GM13977 (cell line): ENCODE measurements at regions of chr4 and their contacts with region 1.

Region 1: GRCh38 chr4:74189331-74190043 is 31.6 kb downstream of the MTHFD2L start:
- DNase-seq: peak; percentile 18
- CTCF ChIP-seq: peak; percentile 63

Region 2: GRCh38 chr4:74311696-74312313 is 122.3 kb after region 1 on chr4:
- in situ Hi-C with region 1: loop called (anchors 10 kb)
- DNase-seq: peak; percentile 9
- CTCF ChIP-seq: peak; percentile 70

Region 3: DNA sequence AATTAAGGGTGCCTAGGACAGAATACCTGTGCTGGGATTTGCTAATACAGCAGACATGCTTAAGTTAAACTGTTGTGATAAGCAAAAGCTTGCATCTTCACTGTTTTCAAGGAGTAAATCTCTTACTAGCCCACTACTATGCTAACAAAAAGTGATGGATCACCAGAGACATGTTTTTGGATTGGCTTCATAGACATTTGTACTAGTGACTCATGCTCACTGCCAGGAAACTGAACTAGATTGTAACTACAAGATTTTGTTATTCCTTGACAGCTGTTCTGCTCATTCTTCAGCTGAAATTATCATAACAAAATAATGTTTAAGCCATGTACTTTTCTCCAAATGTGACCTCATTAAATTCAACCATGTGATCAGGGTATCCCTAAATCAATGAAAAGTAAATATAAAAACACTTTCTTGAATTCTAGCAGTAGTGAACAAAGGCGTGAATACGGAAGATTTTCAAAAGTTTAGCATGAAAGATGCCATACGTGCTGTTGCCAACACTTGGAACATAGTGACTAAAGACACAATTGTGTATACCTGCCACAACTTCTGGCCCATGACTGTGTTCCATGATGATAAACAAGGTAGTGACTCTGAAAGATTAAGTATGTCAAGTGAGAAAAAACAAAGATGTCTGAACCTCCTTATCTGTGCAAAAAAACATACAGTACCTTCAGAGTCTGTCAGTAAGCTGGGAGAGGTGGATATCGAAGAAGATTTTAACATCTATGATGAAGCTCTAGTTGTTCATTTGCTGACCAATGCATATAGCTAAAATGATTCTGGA is 450.8 kb after region 1 on chr4:
- in situ Hi-C with region 1: no loop called
- DNase-seq: no peak
- CTCF ChIP-seq: no peak

Region 4: GRCh38 chr4:74904509-74905065 is 715.1 kb after region 1 on chr4:
- in situ Hi-C with region 1: no loop called
- DNase-seq: no peak
- CTCF ChIP-seq: no peak